ENCODE measurements at regions of chr5 and their contacts with region 1.

Region 1: DNA sequence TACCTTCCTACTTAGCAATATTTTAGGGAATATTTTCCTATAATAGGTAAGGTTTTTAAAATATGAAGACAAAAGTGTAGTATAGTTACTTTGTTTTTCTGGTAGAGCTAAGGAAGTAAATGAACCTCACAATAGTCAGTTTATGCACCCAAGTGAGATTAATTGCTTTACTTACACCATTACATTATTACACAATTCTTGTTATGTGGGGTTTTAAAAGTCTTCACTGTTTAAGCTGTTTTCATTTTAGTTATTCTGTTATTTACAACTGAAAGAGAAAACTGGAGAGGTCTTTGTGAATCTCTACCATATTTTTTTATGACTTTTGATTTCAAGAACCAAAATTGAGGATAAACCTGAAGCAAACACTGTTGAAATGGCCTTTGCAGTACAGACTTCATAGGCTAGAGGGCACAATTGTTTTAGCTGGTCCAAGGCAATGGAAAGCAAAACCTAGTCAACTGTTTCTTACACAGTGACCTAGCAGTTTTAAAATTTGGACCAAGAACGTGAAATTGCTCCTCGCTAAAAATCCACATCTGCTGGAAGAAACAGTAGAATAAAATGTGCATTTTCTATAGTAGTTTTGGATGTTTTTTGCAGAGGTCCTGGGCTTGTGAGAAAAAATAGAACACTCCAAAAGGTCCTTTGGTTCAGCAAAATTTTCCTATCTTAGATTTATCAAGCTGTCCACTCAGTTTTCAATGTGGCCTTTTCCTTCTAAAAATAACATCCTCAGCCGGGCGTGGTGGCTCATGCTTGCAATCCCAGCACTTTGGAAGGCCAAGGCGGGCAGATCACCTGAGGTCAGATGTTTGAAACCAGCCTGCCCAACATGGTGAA is 66.4 kb upstream of the FER start:
- DNase-seq: peak; percentile 71
- CTCF ChIP-seq: peak; percentile 79

Region 2: GRCh38 chr5:109468737-109469420 is 787.6 kb after region 1 on chr5:
- in situ Hi-C with region 1: loop called (anchors 25 kb)
- DNase-seq: peak; percentile 66
- CTCF ChIP-seq: peak; percentile 80

Region 3: GRCh38 chr5:109688971-109689739 is 1007.9 kb after region 1 on chr5:
- in situ Hi-C with region 1: loop called (anchors 25 kb)
- DNase-seq: peak; percentile 92
- CTCF ChIP-seq: no peak